ENCODE measurements at regions of chr18 and their contacts with region 1.

Region 1: GRCh38 chr18:26307189-26307773 is 81.0 kb downstream of the TAF4B start:
- DNase-seq: peak; percentile 52
- CTCF ChIP-seq: peak; percentile 67

Region 2: GRCh38 chr18:26286008-26286407 is 21.3 kb before region 1 on chr18:
- CTCF ChIA-PET with region 1: interaction called, 10 read pairs
- POLR2A ChIA-PET with region 1: no interaction called
- DNase-seq: no peak
- CTCF ChIP-seq: no peak

Region 3: GRCh38 chr18:26362021-26362420 is 54.7 kb after region 1 on chr18:
- CTCF ChIA-PET with region 1: no interaction called
- POLR2A ChIA-PET with region 1: no interaction called
- DNase-seq: no peak
- CTCF ChIP-seq: no peak